ENCODE measurements at regions of chr19 and their contacts with region 1.

Region 1: GRCh38 chr19:47256688-47257443 is 541 bp downstream of the CCDC9 start:
- DNase-seq: peak; percentile 95 to 100
- H3K4me3 ChIP-seq: peak overlapping the region; percentile 68; the same call in 1 of the 2 replicates
- H3K27ac ChIP-seq: peak overlapping the region; percentile 80
- H3K4me1 ChIP-seq: peaks cover 43% of the 10 kb centered on the region
- H3K27me3 ChIP-seq: no peaks in the 10 kb centered on the region
- CTCF ChIP-seq: no peak

Region 2: DNA sequence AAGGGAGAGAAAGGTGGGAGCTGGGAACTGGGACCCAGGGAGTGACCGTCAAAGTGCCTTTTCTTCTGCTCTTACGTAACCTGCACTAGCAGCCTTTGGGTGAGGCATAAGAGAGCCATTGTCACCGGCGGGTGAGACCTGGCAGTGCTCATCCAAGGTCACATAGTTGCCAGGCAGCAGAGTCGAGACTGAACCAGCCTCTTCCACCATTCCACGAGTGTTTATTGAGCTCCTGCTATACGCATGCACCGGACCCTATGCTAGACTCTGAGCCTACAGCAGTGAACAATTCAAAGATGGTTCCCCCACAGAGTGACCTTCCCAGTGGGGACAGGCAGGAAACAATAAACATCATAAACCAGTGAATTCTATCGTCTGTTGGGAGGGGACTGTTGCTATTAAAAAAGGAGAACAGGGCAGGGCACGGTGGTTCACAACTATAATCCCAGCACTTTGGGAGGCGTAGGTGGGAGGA is 492.0 kb before region 1 on chr19:
- CTCF ChIA-PET with region 1: interaction called, 18 read pairs
- POLR2A ChIA-PET with region 1: no interaction called
- intact Hi-C with region 1: no loop called
- DNase-seq: peak in 1 of 2 experiments; percentile 48
- H3K4me3 ChIP-seq: no peak overlapping the region
- H3K27ac ChIP-seq: no peak overlapping the region
- H3K4me1 ChIP-seq: peaks cover 18% of the 10 kb centered on the region
- H3K27me3 ChIP-seq: no peaks in the 10 kb centered on the region
- CTCF ChIP-seq: no peak

Region 3: DNA sequence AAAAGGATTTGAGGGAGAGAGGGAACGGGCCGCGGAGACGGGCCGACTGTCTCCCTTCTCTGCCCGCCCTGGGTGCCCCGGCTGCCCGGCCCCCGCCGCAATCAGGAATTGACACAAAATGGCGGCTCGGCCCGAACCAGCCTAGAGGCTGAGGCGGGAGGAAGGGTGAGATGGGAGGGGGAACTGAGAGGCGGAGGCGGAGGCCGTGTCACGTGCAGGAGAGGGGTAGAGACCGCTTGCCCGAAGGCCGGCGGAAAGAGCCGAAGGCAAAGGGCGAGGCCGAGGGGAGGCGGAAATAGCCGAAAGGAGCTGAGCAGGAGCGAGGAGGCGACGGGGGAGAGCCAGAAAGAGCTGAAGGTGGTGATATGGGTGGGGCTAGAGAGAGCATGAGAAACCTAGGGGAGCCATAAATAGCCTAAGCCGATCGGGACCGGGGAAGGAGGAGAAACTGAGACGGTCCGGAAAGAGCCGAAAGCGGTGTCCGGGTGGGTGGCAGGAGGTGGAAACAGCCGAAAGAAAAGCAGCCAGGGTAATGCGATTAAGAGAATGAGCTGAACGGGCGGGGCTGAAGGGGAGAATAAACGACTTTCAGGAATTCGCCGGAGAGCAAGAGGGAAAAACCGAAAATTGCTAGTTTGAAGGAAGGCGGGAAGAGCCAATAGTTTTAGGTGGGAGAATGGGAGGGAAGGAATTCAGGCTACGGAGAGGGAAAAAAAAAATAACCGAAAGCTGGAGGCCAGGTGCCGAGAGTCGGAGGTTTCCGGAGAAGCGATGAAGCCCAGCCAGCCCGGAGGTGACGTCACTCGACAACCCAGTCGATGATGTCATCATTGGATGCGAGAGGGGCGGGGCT is 143.6 kb before region 1 on chr19 and contains the start of gene ZC3H4:
- CTCF ChIA-PET with region 1: no interaction called
- POLR2A ChIA-PET with region 1: interaction called, 13 read pairs
- intact Hi-C with region 1: no loop called
- DNase-seq: peak; percentile 98 to 100
- H3K4me3 ChIP-seq: peak within 1 kb of the TSS; percentile 71
- H3K27ac ChIP-seq: peak within 1 kb of the TSS; percentile 98
- H3K4me1 ChIP-seq: peaks cover 31% of the 10 kb centered on the region
- H3K27me3 ChIP-seq: no peaks in the 10 kb centered on the region
- CTCF ChIP-seq: 0 out of 2 replicates have a peak, but pooled peaks have one; percentile 25
- total RNA-seq, gene ZC3H4: 41.6 and 51.9 TPM in 2 replicates

Region 4: GRCh38 chr19:47210689-47211316 is 46.1 kb before region 1 on chr19:
- CTCF ChIA-PET with region 1: interaction called, 12 read pairs
- POLR2A ChIA-PET with region 1: no interaction called
- intact Hi-C with region 1: no loop called
- DNase-seq: peak; percentile 67 to 70
- H3K4me3 ChIP-seq: no peak overlapping the region
- H3K27ac ChIP-seq: peak overlapping the region; percentile 70
- H3K4me1 ChIP-seq: peaks cover 15% of the 10 kb centered on the region
- H3K27me3 ChIP-seq: no peaks in the 10 kb centered on the region
- CTCF ChIP-seq: peak; percentile 95

Region 5: GRCh38 chr19:47273313-47273977 is 16.6 kb after region 1 on chr19:
- CTCF ChIA-PET with region 1: interaction called, 6 read pairs
- POLR2A ChIA-PET with region 1: interaction called, 31 read pairs
- intact Hi-C with region 1: loop called (anchors 1 kb)
- DNase-seq: peak; percentile 85 to 90
- H3K4me3 ChIP-seq: peak overlapping the region; percentile 91
- H3K27ac ChIP-seq: peak overlapping the region; percentile 96
- H3K4me1 ChIP-seq: peaks cover 6% of the 10 kb centered on the region; the same call in 1 of the 2 replicates
- H3K27me3 ChIP-seq: no peaks in the 10 kb centered on the region
- CTCF ChIP-seq: no peak

Region 6: DNA sequence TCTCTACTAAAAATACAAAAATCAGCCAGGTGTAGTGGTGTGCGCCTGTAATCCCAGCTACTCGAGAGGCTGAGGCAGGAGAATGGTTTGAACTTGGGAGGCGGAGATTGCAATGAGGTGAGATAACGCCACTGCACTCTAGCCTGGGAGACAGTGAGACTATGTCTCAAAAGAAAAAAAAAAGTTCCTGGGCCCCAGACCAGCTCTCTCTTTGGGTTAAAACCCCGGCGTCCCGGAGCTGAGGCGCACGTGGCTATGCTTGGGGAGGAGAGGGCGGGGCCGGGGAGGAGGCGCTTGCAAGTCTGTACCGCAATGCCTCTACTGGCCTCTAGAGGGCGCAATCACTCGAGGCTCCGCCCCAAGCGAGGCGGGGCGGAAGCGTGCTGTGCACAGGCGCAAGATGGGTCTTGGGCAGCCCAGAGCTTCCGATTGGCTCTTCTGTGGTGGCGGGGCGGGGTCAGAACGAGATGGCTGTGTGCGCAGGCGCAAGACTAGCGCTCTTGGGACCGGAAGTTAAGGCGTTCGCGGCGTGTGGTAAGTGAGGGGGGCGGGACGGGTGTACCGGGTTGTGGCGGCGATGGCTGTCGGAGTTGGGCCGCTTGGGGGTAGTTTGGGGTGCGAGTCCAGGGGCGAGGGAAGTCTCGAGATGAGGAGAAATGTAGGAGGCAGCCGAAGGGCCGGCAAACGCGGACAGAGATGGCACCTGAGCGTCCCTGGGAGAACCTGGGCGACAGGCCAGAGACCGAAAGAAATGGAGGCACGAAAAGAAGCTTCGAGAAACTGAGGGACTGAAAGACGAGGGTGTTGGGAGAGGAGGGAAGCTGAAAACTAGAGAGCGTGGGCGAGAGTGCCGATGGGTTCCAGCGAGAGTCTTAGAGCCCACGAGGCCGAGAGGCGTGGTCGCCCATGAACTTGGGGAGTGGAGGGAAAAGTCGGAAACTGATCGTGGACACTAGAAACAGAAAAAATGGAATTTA is 92.2 kb after region 1 on chr19 and contains the start of gene DHX34:
- CTCF ChIA-PET with region 1: interaction called, 5 read pairs
- POLR2A ChIA-PET with region 1: no interaction called
- intact Hi-C with region 1: loop called (anchors 1 kb)
- DNase-seq: peak; percentile 99
- H3K4me3 ChIP-seq: peak within 1 kb of the TSS; percentile 95
- H3K27ac ChIP-seq: peak within 1 kb of the TSS; percentile 48; the same call in 1 of the 2 replicates
- H3K4me1 ChIP-seq: peaks cover 14% of the 10 kb centered on the region
- H3K27me3 ChIP-seq: no peaks in the 10 kb centered on the region
- CTCF ChIP-seq: peak; percentile 99
- total RNA-seq, gene DHX34: 23.0 TPM in 2 replicates

Region 7: DNA sequence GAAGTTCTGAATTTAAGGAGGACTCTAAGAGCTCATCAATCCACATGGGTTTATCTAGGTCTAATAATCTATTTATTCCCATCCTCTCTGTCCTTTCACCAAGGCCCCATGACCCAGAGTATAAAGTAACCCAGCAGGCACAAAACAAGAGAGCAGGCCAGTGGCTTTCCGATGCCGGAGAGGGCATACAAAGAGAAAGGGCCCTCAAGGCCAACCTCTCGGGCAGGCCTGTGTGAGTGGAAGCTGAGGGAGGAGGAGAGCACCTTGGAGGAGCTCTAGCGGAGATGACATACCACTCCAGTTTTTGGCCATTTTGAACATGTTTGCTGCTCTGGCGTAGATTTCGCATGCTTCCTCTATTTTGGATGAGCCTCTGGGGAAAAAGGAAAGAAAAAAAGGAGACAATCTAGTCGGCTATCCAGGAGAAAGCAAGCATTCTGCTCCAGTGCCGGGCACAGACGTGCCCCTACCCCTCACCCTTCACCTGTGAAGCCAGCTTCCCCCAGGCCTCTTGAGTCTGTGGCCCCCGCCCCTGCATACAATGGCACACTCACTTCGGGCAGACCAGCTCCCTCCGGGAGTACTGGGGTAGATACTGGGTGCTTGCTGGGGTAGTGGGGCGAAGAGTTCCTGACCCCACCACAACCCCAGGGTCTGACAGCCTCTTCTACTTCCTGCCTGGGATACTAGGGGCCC is 246.4 kb after region 1 on chr19:
- CTCF ChIA-PET with region 1: interaction called, 19 read pairs
- POLR2A ChIA-PET with region 1: no interaction called
- intact Hi-C with region 1: no loop called
- DNase-seq: no peak
- H3K4me3 ChIP-seq: no peak overlapping the region
- H3K27ac ChIP-seq: no peak overlapping the region
- H3K4me1 ChIP-seq: no peaks in the 10 kb centered on the region
- H3K27me3 ChIP-seq: no peaks in the 10 kb centered on the region
- CTCF ChIP-seq: no peak